ENCODE measurements at regions of chr1 and their contacts with region 1.

Region 1: GRCh38 chr1:115613767-115614166 is 28.0 kb upstream of the VANGL1 start:
- DNase-seq: no peak
- H3K4me3 ChIP-seq: no peak overlapping the region
- CTCF ChIP-seq: no peak
- POLR2A ChIP-seq: no peak

Region 2: DNA sequence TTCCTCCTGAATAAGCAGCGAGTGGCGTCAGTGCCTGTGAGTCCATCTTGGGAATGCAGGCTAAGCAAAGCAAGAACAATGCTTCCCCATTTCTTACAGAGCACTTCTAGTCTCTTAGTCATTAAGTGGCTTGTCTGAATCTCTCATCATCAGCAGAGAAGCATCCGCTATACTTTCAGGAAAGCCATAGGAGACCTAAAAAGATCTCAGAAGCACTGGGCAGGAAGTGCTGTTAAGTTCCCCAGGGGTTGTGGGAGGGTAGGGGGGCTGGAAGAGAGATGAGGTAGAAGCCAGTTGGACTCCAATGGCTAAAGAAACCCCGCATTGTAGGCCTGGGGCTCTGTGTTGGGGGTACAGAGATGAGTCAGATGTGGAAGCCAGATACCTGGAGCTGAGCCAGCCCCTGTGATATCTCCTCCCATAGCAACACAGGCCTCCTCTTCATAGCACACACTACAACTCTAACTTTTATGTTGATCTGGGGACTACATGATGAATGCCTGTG is 1505.0 kb before region 1 on chr1:
- intact Hi-C with region 1: loop called (anchors 5 kb)
- DNase-seq: no peak
- H3K4me3 ChIP-seq: no peak overlapping the region
- CTCF ChIP-seq: no peak
- POLR2A ChIP-seq: no peak

Region 3: DNA sequence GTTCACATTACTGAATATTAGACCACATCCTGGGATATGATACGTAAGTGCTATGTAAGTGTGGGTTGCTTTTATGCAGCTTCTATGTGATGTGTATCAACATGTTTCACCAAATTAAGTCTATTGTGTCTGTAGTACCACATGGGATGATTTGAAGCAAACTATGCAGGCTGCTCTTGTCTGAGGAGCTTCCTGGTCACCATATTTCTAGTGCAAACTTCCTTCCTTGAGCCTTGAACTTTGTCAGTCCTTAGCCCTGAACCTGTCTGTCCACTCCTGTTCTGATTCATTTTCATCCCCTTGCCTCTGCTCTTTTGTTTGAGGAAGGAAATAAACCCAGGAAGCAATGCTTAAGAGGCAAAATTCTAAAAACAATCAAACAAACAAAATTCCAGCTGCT is 89.5 kb before region 1 on chr1:
- intact Hi-C with region 1: no loop called
- DNase-seq: no peak
- H3K4me3 ChIP-seq: no peak overlapping the region
- CTCF ChIP-seq: no peak
- POLR2A ChIP-seq: no peak

Region 4: DNA sequence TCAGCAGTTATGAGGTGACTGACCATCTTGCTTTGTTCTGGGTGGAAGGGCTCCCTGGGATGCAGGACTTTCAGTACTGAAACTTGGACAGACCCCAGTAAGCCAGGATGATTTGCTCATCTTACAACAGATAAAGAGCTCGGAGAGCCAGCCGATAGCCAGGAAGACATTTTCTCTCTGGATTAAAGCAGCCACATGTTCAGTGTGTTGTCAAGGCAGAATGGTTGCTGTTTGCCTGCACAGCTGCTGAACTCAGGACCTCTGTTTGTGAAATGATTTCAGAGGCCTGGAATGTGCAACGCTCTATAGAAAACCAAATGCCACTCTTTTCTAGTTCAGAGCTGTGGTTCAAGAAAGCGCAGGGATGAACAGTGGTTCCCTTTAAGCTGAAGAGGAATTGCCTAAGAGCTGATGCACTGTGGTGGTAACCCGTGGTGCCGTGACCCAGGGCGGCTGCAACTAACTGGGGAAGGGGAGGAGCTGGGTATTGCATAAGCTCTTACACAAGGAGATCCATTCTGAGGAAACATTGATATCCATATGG is 114.0 kb after region 1 on chr1:
- intact Hi-C with region 1: no loop called
- DNase-seq: peak; percentile 82 to 95
- H3K4me3 ChIP-seq: no peak overlapping the region
- CTCF ChIP-seq: no peak
- POLR2A ChIP-seq: no peak

Region 5: DNA sequence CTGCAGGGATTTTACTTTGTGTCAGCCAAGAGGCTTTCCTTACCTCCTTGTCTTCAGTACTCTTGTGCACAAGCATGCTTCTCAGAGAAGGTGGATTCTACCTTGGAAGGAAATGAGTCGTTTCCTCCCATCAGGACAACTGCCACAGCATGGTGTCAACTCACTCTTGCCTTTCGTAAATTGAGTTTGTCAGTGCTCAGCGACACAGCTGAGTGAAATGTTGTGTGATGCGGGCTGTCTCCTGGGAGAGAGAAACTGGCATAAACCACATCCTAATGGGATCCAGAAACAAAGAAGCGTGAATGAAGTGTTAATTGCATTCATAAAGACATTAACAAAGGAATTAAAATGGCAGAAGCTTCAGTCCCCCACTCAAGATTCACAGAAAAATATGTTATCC is 311.0 kb after region 1 on chr1:
- intact Hi-C with region 1: no loop called
- DNase-seq: no peak
- H3K4me3 ChIP-seq: no peak overlapping the region
- CTCF ChIP-seq: no peak
- POLR2A ChIP-seq: no peak